Prostate gland (tissue), 2 donors: ENCODE measurements at regions of chr2 and their contacts with region 1.

Region 1: GRCh38 chr2:33033606-33034081 is 86.9 kb downstream of the LTBP1 start:
- DNase-seq: no peak
- H3K4me3 ChIP-seq: no peak overlapping the region
- H3K27ac ChIP-seq: no peak overlapping the region
- H3K4me1 ChIP-seq: no peaks in the 10 kb centered on the region
- H3K27me3 ChIP-seq: no peaks in the 10 kb centered on the region
- CTCF ChIP-seq: peak; percentile 21 to 73 (median 50)
- POLR2A ChIP-seq: no peak

Region 2: DNA sequence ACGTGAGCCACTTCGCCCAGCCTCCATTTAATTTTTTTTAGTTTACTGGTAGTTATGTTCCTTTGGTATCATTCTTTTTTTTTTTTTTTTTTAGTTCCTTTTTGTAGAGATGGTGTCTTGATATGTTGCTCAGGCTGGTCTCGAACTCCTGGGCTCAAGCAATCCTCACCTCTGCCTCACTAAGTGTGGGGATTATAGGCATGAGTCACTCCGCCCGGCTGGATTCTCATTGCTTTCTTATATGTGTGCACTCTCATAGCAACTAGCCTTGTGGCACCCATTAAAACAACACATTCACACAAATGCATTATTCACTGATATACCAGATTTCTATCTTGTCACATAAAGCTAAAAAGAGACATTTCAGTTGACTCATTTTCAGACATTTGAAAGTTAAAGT is 401.6 kb before region 1 on chr2:
- intact Hi-C with region 1: no loop called
- DNase-seq: no peak
- H3K4me3 ChIP-seq: no peak overlapping the region
- H3K27ac ChIP-seq: no peak overlapping the region
- H3K4me1 ChIP-seq: no peaks in the 10 kb centered on the region
- H3K27me3 ChIP-seq: no peaks in the 10 kb centered on the region
- CTCF ChIP-seq: no peak
- POLR2A ChIP-seq: no peak

Region 3: GRCh38 chr2:32825291-32825712 is 208.3 kb before region 1 on chr2:
- intact Hi-C with region 1: no loop called
- DNase-seq: no peak
- H3K4me3 ChIP-seq: no peak overlapping the region
- H3K27ac ChIP-seq: no peak overlapping the region
- H3K4me1 ChIP-seq: peaks cover 2% of the 10 kb centered on the region
- H3K27me3 ChIP-seq: no peaks in the 10 kb centered on the region
- CTCF ChIP-seq: no peak
- POLR2A ChIP-seq: no peak

Region 4: DNA sequence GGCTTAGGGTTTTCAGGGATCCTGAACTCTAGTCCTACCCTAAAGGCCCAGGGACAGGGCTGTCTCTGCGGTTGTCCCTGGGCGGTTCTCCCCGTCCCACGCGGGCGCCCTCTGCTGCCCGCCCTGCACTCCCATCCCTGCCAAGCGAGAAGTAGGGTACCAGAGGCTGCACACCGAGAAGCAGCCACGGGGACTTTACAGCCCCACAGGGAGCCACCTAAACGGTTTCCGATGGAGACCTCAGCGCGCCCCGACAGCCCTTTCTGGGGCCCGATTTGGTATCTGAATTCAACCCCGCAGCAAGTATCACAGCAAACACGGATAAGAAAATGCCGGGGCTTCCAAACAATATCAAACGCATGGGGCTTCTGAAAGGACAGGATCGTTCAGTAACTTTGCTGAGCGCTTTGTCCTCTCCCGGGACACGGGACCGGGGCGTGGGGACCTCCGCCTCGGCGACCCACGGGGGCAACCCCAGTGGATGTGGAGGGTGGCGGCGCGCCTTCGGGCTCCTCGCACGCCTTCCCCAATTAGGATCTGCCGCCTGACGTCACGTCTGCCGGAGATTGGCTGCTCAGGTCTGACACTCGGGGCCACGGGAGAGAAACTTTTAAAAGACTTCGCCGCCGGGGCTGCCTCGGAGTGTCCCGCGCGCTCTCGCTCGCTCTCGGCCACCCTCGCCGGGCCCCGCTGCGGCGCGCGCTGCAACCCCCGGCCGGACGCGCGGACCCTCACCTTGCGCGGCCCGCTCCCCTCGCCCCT is 87.1 kb before region 1 on chr2 and contains the start of gene LTBP1:
- intact Hi-C with region 1: loop called (anchors 2 kb)
- DNase-seq: peak; percentile 75
- H3K4me3 ChIP-seq: peak within 1 kb of the TSS; percentile 89 to 92
- H3K27ac ChIP-seq: peak within 1 kb of the TSS; percentile 90 to 91
- H3K4me1 ChIP-seq: no peaks in the 10 kb centered on the region
- H3K27me3 ChIP-seq: no peaks in the 10 kb centered on the region
- CTCF ChIP-seq: peak; percentile 55 to 74 (median 68)
- POLR2A ChIP-seq: peak; percentile 68
- total RNA-seq, gene LTBP1: 25.9 to 99.8 TPM

Region 5: DNA sequence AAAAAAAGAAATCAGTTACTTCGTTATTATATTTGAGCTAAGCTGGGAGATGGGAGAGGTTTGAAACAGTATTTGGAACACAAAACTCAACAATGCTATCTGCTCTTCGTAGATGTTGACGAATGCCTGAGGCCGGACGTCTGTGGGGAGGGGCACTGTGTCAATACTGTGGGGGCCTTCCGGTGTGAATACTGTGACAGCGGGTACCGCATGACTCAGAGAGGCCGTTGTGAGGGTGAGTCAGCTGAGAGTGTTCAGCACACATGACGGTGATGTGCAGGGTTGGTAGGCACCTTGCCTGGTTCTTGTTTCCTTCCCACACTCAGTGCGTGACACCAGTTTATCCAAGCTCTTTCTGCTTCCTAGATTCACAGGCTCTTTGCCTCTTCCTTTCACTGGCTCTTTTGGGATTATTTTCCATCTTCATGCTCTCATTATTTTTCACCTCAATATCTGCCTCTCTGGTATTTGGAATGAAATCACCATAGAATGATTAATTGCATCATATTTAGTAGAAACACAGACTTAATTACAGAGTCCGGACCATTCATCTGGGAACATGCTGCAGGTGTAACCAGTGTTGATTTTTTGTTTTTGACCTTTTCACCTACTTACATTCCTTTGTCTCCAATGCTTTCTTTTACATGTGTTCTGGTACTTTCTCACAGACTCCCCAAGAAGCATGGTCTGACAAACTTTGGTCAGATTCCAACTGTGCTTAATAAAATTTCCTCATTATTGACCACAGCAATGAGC is 242.2 kb after region 1 on chr2:
- intact Hi-C with region 1: loop called (anchors 2 kb)
- DNase-seq: no peak
- H3K4me3 ChIP-seq: no peak overlapping the region
- H3K27ac ChIP-seq: no peak overlapping the region
- H3K4me1 ChIP-seq: no peaks in the 10 kb centered on the region
- H3K27me3 ChIP-seq: no peaks in the 10 kb centered on the region
- CTCF ChIP-seq: no peak
- POLR2A ChIP-seq: no peak

Region 6: DNA sequence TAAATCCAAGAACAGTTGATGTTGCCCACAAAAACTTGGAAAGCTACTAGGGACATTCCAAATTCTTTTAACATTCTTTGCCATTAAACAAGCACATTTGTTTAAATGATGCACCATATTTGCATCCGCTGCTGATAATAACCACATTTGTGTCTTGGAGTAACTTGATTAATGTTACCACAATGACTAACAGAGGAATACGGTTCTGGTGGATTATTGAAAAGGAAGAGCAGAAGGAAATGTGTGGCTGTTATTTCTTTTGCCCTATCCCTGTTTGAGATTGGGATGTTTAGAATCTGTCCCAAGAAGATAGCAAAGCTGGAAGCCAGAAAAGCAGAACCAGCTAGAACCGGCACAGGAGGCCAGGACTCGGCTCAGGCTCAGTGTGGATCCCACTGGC is 403.7 kb after region 1 on chr2:
- intact Hi-C with region 1: loop called (anchors 5 kb)
- DNase-seq: no peak
- H3K4me3 ChIP-seq: no peak overlapping the region
- H3K27ac ChIP-seq: no peak overlapping the region
- H3K4me1 ChIP-seq: no peaks in the 10 kb centered on the region
- H3K27me3 ChIP-seq: no peaks in the 10 kb centered on the region
- CTCF ChIP-seq: no peak
- POLR2A ChIP-seq: no peak